ENCODE measurements at regions of chr19 and their contacts with region 1.

Region 1: GRCh38 chr19:15161028-15161989 is 39.5 kb downstream of the NOTCH3 start:
- DNase-seq: no peak

Region 2: GRCh38 chr19:13484166-13484565 is 1677.1 kb before region 1 on chr19:
- intact Hi-C with region 1: loop called in 1 of 2 experiments (anchors 5 kb)
- DNase-seq: no peak

Region 3: GRCh38 chr19:15129856-15130597 is 31.3 kb before region 1 on chr19:
- intact Hi-C with region 1: loop called in 1 of 2 experiments (anchors 1 kb)
- DNase-seq: no peak

Measured in posterior vena cava (tissue), 2 donors.